ENCODE measurements at regions of chr11 and their contacts with region 1.

Region 1: DNA sequence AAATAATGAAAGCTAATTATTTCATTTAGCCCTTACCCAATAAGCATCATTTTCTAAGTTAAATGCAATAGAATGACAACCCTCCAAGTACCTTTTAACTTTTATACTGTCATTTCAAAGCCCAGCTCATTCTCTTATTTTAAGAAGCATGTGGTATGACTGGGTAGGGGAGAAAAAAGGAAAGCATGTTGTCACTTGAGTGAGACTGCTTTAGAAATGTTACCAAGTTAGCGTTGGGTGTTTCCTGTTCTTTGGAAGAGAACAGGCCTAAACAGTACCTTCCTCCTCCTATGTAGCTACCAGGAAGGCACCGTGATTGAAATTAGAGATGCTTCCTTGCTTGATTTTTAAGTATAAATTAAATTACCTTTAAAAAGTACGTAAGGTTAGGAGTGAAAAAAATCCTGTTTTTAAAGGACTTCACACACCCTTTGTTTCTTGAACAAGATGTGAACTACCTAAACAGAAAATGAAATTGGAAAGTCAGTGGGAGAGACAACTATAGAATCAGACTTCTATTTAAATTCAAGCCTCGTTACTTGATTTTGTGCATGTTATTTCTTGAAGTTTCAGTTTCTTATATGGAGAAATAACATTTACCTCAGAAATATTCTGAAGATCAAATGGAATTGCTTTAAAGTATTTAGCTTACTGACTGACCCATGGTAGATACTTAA is 741 bp upstream of the CNTF start:
- DNase-seq: no peak
- ATAC-seq: no peak
- H3K4me3 ChIP-seq: no peak overlapping the region
- H3K27ac ChIP-seq: no peak overlapping the region
- H3K4me1 ChIP-seq: peaks cover 10% of the 10 kb centered on the region
- H3K27me3 ChIP-seq: no peaks in the 10 kb centered on the region
- CTCF ChIP-seq: no peak

Region 2: GRCh38 chr11:58318532-58318931 is 303.2 kb before region 1 on chr11:
- intact Hi-C with region 1: no loop called
- DNase-seq: no peak
- ATAC-seq: no peak
- H3K4me3 ChIP-seq: no peak overlapping the region
- H3K27ac ChIP-seq: no peak overlapping the region
- H3K4me1 ChIP-seq: no peaks in the 10 kb centered on the region
- H3K27me3 ChIP-seq: no peaks in the 10 kb centered on the region
- CTCF ChIP-seq: no peak

Region 3: GRCh38 chr11:58609723-58610122 is 12.0 kb before region 1 on chr11:
- intact Hi-C with region 1: loop called in 1 of 2 experiments (anchors 1 kb)
- DNase-seq: no peak
- ATAC-seq: no peak
- H3K4me3 ChIP-seq: no peak overlapping the region
- H3K27ac ChIP-seq: no peak overlapping the region
- H3K4me1 ChIP-seq: peaks cover 14% of the 10 kb centered on the region
- H3K27me3 ChIP-seq: no peaks in the 10 kb centered on the region
- CTCF ChIP-seq: no peak

Measured in psoas muscle (tissue), 8 donors.